Aorta (tissue), 5 donors: ENCODE measurements at regions of chr1 and their contacts with region 1.

Region 1: GRCh38 chr1:9867408-9868243 is 42.4 kb downstream of the CTNNBIP1 start:
- DNase-seq: peak; percentile 85 to 94
- ATAC-seq: peak; percentile 90
- H3K4me3 ChIP-seq: no peak overlapping the region
- H3K27ac ChIP-seq: no peak overlapping the region
- H3K4me1 ChIP-seq: no peaks in the 10 kb centered on the region
- H3K27me3 ChIP-seq: no peaks in the 10 kb centered on the region

Region 2: DNA sequence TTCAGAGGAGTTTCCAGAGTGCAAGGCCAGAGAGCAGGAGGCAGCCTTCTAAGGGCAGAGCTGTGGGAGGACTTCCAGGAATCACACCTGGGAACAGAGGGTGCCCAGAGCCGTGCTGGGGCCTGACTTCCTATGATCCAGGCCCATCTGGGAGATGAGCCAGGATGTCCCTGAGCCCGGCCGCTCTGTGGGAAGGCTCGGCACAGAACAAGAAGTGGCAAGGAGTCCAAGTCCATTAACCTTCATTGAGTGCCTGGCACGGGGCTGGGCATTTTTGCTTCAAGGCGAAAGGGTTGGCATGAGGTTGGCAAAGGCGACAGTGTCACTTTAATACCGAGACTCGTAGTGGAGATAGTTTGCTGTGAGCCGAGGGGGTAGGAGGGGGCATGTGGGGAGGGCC is 260.7 kb before region 1 on chr1:
- intact Hi-C with region 1: no loop called
- DNase-seq: no peak
- ATAC-seq: no peak
- H3K4me3 ChIP-seq: no peak overlapping the region
- H3K27ac ChIP-seq: no peak overlapping the region
- H3K4me1 ChIP-seq: no peaks in the 10 kb centered on the region
- H3K27me3 ChIP-seq: no peaks in the 10 kb centered on the region

Region 3: GRCh38 chr1:9626201-9626608 is 241.4 kb before region 1 on chr1:
- intact Hi-C with region 1: loop called (anchors 2 kb)
- DNase-seq: no peak
- ATAC-seq: no peak
- H3K4me3 ChIP-seq: no peak overlapping the region
- H3K27ac ChIP-seq: no peak overlapping the region
- H3K4me1 ChIP-seq: no peaks in the 10 kb centered on the region
- H3K27me3 ChIP-seq: no peaks in the 10 kb centered on the region

Region 4: GRCh38 chr1:9724706-9725476 is 142.7 kb before region 1 on chr1:
- intact Hi-C with region 1: loop called (anchors 2 to 10 kb)
- DNase-seq: peak in 1 of 2 donors; percentile 75
- ATAC-seq: peak; percentile 28
- H3K4me3 ChIP-seq: no peak overlapping the region
- H3K27ac ChIP-seq: no peak overlapping the region
- H3K4me1 ChIP-seq: no peaks in the 10 kb centered on the region
- H3K27me3 ChIP-seq: no peaks in the 10 kb centered on the region

Region 5: GRCh38 chr1:9784508-9785133 is 83.0 kb before region 1 on chr1:
- intact Hi-C with region 1: loop called (anchors 2 to 5 kb)
- DNase-seq: no peak
- ATAC-seq: no peak
- H3K4me3 ChIP-seq: no peak overlapping the region
- H3K27ac ChIP-seq: no peak overlapping the region
- H3K4me1 ChIP-seq: no peaks in the 10 kb centered on the region
- H3K27me3 ChIP-seq: no peaks in the 10 kb centered on the region

Region 6: DNA sequence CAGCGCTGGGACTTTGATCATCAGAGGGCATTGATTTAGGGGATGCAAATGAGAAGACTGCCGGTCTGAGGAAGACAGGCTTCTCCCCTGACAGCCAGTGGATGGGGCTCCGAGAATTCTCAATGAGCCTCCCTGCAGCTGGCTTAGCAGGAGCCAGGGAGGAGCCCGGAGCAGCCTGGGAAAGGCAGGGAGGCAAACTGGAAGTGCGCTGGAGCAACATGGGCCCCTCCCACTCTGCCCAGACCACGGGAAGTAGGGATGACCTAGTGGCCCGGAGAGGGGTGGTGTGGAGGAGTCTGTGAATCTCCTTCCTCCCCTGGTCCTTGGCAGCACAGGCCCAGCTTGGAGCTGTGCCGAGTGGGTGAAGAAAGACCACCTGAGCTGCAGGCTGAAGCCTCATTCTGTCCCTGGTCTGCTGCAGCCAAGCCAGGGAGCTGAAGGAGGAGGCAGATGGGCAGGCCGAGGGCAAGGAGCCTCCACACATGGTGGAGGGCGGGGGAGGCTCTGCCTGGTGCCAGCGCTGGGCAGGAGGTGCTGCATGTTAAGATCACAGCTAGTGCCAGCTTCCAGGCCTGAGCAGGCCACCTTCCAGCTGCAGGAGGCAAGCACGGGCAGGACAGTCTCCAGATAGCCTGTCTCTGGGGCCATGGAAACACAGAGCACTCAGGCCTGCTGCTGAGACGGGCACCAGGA is 31.7 kb before region 1 on chr1:
- intact Hi-C with region 1: no loop called
- DNase-seq: peak in 1 of 2 donors; percentile 69
- ATAC-seq: peak; percentile 70
- H3K4me3 ChIP-seq: no peak overlapping the region
- H3K27ac ChIP-seq: no peak overlapping the region
- H3K4me1 ChIP-seq: no peaks in the 10 kb centered on the region
- H3K27me3 ChIP-seq: no peaks in the 10 kb centered on the region

Region 7: DNA sequence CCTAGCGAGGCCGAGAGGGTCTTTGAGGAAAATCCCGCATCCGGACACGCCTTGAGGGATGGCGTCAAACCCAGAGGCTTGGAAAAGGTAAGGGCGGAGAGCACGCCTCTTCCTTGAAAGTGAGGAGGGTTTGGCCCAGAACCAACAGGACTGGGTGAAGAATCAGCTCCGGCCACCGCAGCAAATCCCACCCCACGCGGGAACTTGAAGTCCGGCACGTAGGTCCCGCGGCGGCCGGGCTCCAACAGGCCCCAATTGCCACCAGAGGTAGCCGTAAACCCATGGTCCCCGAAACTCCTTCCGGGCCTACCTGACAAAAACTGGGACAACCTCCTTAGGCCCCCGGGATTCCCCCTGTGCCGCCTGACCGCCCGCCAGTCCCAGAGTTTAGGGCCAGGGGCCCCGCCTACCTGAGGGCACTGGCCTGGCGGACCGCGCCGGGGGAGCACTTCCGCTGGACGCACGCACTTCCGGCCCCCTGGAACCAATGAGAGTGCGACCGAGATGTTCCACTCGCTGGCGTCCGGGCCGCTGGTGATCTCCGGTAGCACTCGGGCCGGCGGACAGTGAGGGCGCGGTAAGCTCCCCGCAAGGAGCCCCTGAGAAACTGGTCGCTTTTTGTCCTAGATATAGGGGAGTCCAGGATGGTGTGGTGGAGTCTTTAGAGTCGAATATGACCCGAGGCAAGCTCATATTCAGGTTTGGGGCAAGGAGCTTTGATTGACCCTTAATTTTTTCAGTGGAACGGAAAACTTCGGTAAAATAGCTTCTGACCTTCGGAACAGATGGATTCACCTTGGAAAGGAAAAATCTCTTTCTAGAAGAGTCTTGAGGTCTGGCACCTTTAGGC is 75.5 kb after region 1 on chr1 and contains the starts of genes LZIC and NMNAT1:
- intact Hi-C with region 1: no loop called
- DNase-seq: peak; percentile 95 to 97
- ATAC-seq: peak; percentile 99
- H3K4me3 ChIP-seq: peak within 1 kb of the TSS; percentile 75 to 83
- H3K27ac ChIP-seq: peak within 1 kb of the TSS; percentile 32 to 71
- H3K4me1 ChIP-seq: no peaks in the 10 kb centered on the region
- H3K27me3 ChIP-seq: no peaks in the 10 kb centered on the region
- total RNA-seq, gene LZIC: 25.8 to 30.7 TPM
- total RNA-seq, gene NMNAT1: 5.7 to 11.2 TPM